Activated T-helper 2 cell treated with anti-CD3 and anti-CD28 coated beads, Interferon-gamma antibody, Interleukin-2, Interleukin-4, amounts not matched to agents 10 μg/mL and 5 μg/mL and 100 μg/mL, durations not matched to agents 14 hours and 24 hours and 36 hours (primary cell): ENCODE measurements at regions of chr5 and their contacts with region 1.

Region 1: GRCh38 chr5:80083101-80083890 is 48.1 kb downstream of the THBS4 start:
- DNase-seq: peak; percentile 18
- H3K4me3 Mint-ChIP-seq: peak overlapping the region; percentile 72
- H3K27ac Mint-ChIP-seq: peak overlapping the region; percentile 74
- H3K4me1 Mint-ChIP-seq: peaks cover 7% of the 10 kb centered on the region
- H3K27me3 Mint-ChIP-seq: peaks cover 4% of the 10 kb centered on the region

Region 2: GRCh38 chr5:79702606-79703382 is 380.5 kb before region 1 on chr5:
- intact Hi-C with region 1: loop called (anchors 2 kb)
- DNase-seq: peak; percentile 16
- H3K4me3 Mint-ChIP-seq: no peak overlapping the region
- H3K27ac Mint-ChIP-seq: no peak overlapping the region
- H3K4me1 Mint-ChIP-seq: peaks cover 22% of the 10 kb centered on the region
- H3K27me3 Mint-ChIP-seq: no peaks in the 10 kb centered on the region

Region 3: DNA sequence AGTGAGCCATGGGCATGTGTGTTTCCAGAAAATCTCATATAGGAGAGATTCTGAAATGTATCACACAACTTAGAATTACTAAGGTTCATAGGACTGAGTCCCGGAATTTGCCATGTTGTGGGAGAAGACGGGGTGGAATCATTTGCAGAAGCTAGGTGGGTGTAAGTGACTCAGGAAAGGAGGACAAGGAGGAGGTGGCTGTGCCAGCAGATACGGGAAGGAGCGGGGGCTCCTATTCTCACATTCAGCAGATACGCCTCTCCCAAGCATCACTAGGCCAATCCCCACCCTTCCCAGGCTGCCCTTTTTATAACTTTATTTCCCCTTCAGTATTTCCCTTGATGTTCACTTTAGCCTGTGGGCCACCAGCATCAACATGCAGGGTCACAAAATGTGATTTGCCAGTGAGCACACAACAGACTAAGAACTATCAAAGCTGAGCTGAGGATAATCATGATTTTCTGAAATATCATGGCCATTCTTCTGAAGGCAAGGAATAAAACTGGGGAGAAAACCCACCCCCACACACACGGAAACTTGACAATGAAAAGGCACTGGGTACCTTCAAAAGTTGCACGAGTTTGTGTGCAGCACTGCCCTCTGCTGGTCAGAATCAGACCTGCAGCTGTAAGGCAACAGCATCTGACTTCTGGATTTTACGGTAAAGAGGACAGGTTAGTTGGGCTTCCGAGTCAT is 225.4 kb before region 1 on chr5:
- intact Hi-C with region 1: loop called (anchors 1 kb)
- DNase-seq: peak; percentile 58
- H3K4me3 Mint-ChIP-seq: no peak overlapping the region
- H3K27ac Mint-ChIP-seq: no peak overlapping the region
- H3K4me1 Mint-ChIP-seq: peaks cover 3% of the 10 kb centered on the region
- H3K27me3 Mint-ChIP-seq: peaks cover 21% of the 10 kb centered on the region

Region 4: GRCh38 chr5:79878721-79879336 is 204.5 kb before region 1 on chr5:
- intact Hi-C with region 1: loop called (anchors 1 kb)
- DNase-seq: peak; percentile 15
- H3K4me3 Mint-ChIP-seq: no peak overlapping the region
- H3K27ac Mint-ChIP-seq: no peak overlapping the region
- H3K4me1 Mint-ChIP-seq: peaks cover 2% of the 10 kb centered on the region
- H3K27me3 Mint-ChIP-seq: peaks cover 3% of the 10 kb centered on the region

Region 5: GRCh38 chr5:79924936-79925893 is 158.1 kb before region 1 on chr5:
- intact Hi-C with region 1: loop called (anchors 1 kb)
- DNase-seq: no peak
- H3K4me3 Mint-ChIP-seq: no peak overlapping the region
- H3K27ac Mint-ChIP-seq: no peak overlapping the region
- H3K4me1 Mint-ChIP-seq: peaks cover 10% of the 10 kb centered on the region
- H3K27me3 Mint-ChIP-seq: peaks cover 11% of the 10 kb centered on the region

Region 6: GRCh38 chr5:80109646-80110478 is 26.6 kb after region 1 on chr5:
- intact Hi-C with region 1: no loop called
- DNase-seq: no peak
- H3K4me3 Mint-ChIP-seq: no peak overlapping the region
- H3K27ac Mint-ChIP-seq: no peak overlapping the region
- H3K4me1 Mint-ChIP-seq: peaks cover 2% of the 10 kb centered on the region
- H3K27me3 Mint-ChIP-seq: no peaks in the 10 kb centered on the region